ENCODE measurements at regions of chr14 and their contacts with region 1.

Region 1: DNA sequence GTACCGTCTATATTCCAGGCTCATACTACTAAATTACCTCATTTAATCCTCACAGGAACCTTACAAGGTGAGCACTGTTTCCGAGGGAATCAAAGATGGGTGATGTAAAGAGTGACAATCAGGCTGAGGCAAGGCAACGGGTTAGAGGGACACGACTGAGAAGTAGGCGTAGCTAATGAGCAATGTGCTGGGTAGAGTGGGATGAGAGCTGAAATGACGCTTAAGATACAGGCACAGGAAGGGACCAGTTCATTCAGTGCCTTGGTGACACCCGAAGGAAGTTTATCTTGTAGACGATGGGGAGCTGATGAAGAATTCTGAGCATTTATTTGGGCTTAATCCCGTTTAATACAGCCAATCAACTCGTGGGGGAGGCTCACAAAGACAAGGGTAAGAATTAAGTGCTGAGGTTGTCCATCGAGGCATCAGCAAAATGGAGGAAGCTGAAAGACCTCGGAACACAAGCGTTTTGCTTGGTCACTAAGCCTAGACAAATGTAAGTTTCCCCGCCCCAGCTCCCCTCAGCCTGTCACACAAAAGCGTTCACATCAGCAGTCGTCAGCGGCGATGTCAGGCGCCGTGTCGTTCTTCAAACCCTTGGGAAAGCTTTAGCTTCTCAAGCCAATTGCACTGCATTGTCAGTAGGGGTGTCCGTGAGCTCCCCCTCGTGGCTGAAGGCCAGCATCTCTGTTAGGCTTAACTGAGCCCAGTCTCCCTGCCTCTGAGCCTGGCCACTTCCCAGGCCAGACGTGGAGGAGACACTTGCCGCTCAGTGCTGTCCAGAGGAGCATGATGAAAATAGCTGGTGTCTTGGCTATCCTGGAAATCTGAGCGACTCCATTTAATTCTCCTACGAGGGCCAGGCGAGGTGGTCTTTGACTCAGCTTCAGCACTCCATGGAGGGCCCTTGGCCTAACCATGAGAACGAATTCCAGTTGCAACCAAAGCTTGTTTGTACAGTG is 288.5 kb upstream of the G2E3 start:
- DNase-seq: peak; percentile 51
- ATAC-seq: peak; percentile 64
- H3K4me3 ChIP-seq: no peak overlapping the region
- H3K4me3 Mint-ChIP-seq: no peak overlapping the region
- H3K27ac ChIP-seq: no peak overlapping the region
- H3K27ac Mint-ChIP-seq: no peak overlapping the region
- H3K4me1 ChIP-seq: peaks cover 0 to 3% of the 10 kb centered on the region in 2 donors
- H3K4me1 Mint-ChIP-seq: peaks cover 5% of the 10 kb centered on the region
- H3K27me3 ChIP-seq: no peaks in the 10 kb centered on the region
- H3K27me3 Mint-ChIP-seq: peaks cover 12% of the 10 kb centered on the region
- CTCF ChIP-seq: peak; percentile 77

Region 2: GRCh38 chr14:30283826-30284446 is 13.5 kb after region 1 on chr14:
- CTCF ChIA-PET with region 1: interaction called, 21 read pairs
- POLR2A ChIA-PET with region 1: no interaction called
- intact Hi-C with region 1: no loop called
- DNase-seq: no peak
- ATAC-seq: no peak
- H3K4me3 ChIP-seq: no peak overlapping the region
- H3K4me3 Mint-ChIP-seq: no peak overlapping the region
- H3K27ac ChIP-seq: no peak overlapping the region
- H3K27ac Mint-ChIP-seq: no peak overlapping the region
- H3K4me1 ChIP-seq: no peaks in the 10 kb centered on the region
- H3K4me1 Mint-ChIP-seq: no peaks in the 10 kb centered on the region
- H3K27me3 ChIP-seq: no peaks in the 10 kb centered on the region
- H3K27me3 Mint-ChIP-seq: no peaks in the 10 kb centered on the region
- CTCF ChIP-seq: peak; percentile 21

Region 3: GRCh38 chr14:30305346-30305745 is 34.9 kb after region 1 on chr14:
- CTCF ChIA-PET with region 1: no interaction called
- POLR2A ChIA-PET with region 1: no interaction called
- intact Hi-C with region 1: no loop called
- DNase-seq: no peak
- ATAC-seq: no peak
- H3K4me3 ChIP-seq: no peak overlapping the region
- H3K4me3 Mint-ChIP-seq: no peak overlapping the region
- H3K27ac ChIP-seq: no peak overlapping the region
- H3K27ac Mint-ChIP-seq: no peak overlapping the region
- H3K4me1 ChIP-seq: no peaks in the 10 kb centered on the region
- H3K4me1 Mint-ChIP-seq: no peaks in the 10 kb centered on the region
- H3K27me3 ChIP-seq: no peaks in the 10 kb centered on the region
- H3K27me3 Mint-ChIP-seq: no peaks in the 10 kb centered on the region
- CTCF ChIP-seq: no peak

Measured in B cell (primary cell).